ENCODE measurements at regions of chr2 and their contacts with region 1.

Region 1: DNA sequence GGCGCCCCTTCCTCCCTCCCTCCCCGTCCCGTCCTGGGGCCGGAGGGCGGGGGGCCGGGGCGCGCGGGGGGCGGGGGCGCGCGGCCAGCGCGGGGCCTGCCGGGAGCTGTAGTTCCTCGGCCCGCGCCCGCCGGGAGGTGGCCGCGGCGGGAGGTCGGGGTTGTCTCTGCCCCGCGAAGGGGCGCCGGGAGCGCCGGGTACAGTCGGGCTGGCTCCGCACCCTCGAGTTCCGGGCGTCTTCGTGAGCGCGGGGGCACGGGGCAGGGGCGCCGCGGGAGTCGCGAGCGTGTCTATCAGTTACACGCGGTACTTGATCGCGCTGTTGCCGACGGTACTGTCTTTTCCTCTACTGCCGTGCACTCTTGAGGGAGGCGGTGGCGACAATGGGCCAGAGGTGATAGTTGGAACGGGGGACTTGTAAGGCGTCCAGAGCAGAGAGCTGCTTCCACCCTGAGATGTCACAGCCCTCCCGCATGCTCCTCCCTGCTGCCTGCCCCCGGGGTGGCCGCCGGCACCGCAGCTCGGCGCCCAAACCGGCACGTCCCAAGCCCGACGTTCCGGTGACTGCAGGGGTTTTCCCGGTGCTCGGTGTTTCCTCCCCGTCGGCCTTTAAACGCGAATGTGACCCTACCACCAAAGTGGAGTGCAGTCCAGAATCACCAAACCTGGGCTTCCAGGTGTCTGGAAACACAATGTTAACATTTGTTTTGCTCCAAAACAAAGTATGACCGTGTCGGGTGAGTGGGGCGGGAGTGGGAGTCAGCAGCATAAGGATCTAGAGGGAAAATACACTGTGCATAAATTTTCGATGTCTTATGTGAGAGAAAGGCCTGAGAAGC is at the start of gene PRKD3:
- DNase-seq: peak in 8 of 9 experiments; percentile 13 to 84 (median 58)
- ATAC-seq: peak; percentile 75
- H3K4me3 ChIP-seq: peak within 1 kb of the TSS; percentile 81 to 84
- H3K4me3 Mint-ChIP-seq: peak within 1 kb of the TSS; percentile 98
- H3K27ac ChIP-seq: peak within 1 kb of the TSS; percentile 68 to 71
- H3K27ac Mint-ChIP-seq: peak within 1 kb of the TSS; percentile 97
- H3K4me1 ChIP-seq: peaks cover 25% of the 10 kb centered on the region
- H3K4me1 Mint-ChIP-seq: peaks cover 35% of the 10 kb centered on the region
- H3K27me3 ChIP-seq: peaks cover 0 to 8% of the 10 kb centered on the region in 2 experiments
- H3K27me3 Mint-ChIP-seq: peaks cover 3% of the 10 kb centered on the region
- CTCF ChIP-seq: no peak
- total RNA-seq, gene PRKD3: 37.2 to 43.8 TPM

Region 2: GRCh38 chr2:36966370-36967235 is 358.4 kb before region 1 on chr2 and contains the start of gene STRN:
- CTCF ChIA-PET with region 1: no interaction called
- POLR2A ChIA-PET with region 1: no interaction called
- intact Hi-C with region 1: loop called in 1 of 2 experiments (anchors 2 kb)
- DNase-seq: peak; percentile 94 to 99 (median 98)
- ATAC-seq: peak; percentile 91
- H3K4me3 ChIP-seq: peak within 1 kb of the TSS; percentile 69 to 96
- H3K4me3 Mint-ChIP-seq: peak within 1 kb of the TSS; percentile 98
- H3K27ac ChIP-seq: peak within 1 kb of the TSS; percentile 76 to 97
- H3K27ac Mint-ChIP-seq: peak within 1 kb of the TSS; percentile 99
- H3K4me1 ChIP-seq: peaks cover 19% of the 10 kb centered on the region
- H3K4me1 Mint-ChIP-seq: peaks cover 50% of the 10 kb centered on the region
- H3K27me3 ChIP-seq: no peaks in the 10 kb centered on the region
- H3K27me3 Mint-ChIP-seq: no peaks in the 10 kb centered on the region
- CTCF ChIP-seq: no peak
- total RNA-seq, gene STRN: 15.6 to 17.4 TPM

Region 3: GRCh38 chr2:37156857-37157714 is 167.9 kb before region 1 on chr2 and contains the start of gene EIF2AK2:
- CTCF ChIA-PET with region 1: no interaction called
- POLR2A ChIA-PET with region 1: no interaction called
- intact Hi-C with region 1: loop called in 1 of 2 experiments (anchors 5 kb)
- DNase-seq: peak; percentile 67 to 91 (median 84)
- ATAC-seq: peak; percentile 97
- H3K4me3 ChIP-seq: peak within 1 kb of the TSS; percentile 82 to 94
- H3K4me3 Mint-ChIP-seq: peak within 1 kb of the TSS; percentile 94
- H3K27ac ChIP-seq: peak within 1 kb of the TSS; percentile 62 to 76
- H3K27ac Mint-ChIP-seq: peak within 1 kb of the TSS; percentile 91
- H3K4me1 ChIP-seq: peaks cover 27% of the 10 kb centered on the region
- H3K4me1 Mint-ChIP-seq: peaks cover 50% of the 10 kb centered on the region
- H3K27me3 ChIP-seq: no peaks in the 10 kb centered on the region
- H3K27me3 Mint-ChIP-seq: no peaks in the 10 kb centered on the region
- CTCF ChIP-seq: no peak
- total RNA-seq, gene EIF2AK2: 30.1 to 33.7 TPM

Region 4: DNA sequence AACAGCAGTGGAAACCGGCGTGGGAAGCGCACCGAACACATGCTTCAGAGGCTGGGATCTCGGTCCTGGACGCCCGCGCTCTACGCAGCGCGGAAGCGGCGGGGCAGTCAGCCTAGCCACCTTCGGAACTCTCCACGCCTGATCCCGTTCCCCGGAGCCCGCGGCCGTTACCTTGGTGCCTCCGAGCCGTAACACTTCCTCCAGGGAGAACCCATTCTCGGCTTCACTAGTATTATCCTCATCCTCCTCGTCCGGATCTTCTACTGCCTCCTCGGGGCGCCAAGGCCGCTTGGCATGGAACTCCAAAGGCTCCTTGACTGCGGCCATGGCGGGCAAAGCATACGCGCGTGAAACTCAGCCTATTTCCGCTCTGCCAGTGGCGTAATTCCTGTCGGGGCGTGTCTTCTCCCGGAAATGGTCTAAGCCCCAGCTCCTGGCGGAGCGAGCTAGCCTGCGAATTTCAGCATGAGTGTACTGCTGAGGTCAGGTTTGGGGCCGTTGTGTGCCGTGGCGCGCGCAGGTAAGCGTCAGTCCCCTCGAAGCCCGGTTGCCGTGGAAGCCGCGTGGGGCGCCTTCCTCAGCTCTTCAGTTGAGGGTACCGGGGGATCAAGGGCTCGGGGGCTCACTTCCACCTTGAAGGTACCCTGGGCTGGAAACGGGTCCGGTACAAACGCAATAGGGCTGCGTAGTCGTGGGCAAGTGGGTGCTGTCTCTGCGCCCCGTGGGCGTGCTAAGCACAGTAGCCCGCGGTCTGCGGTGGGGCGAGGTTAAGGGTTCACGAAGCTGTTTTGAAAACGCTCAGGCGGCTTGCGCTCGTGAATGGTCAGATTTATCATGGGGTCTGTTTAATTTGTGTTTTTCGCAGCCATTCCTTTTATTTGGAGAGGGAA is 93.5 kb before region 1 on chr2 and contains the starts of genes CEBPZ and NDUFAF7:
- CTCF ChIA-PET with region 1: no interaction called
- POLR2A ChIA-PET with region 1: interaction called, 6 read pairs
- intact Hi-C with region 1: loop called in 1 of 2 experiments (anchors 1 kb)
- DNase-seq: peak; percentile 73 to 95 (median 87)
- ATAC-seq: peak; percentile 86
- H3K4me3 ChIP-seq: peak within 1 kb of the TSS; percentile 83 to 92
- H3K4me3 Mint-ChIP-seq: no peak within 1 kb of the TSS
- H3K27ac ChIP-seq: peak within 1 kb of the TSS; percentile 93 to 94
- H3K27ac Mint-ChIP-seq: no peak within 1 kb of the TSS
- H3K4me1 ChIP-seq: peaks cover 45% of the 10 kb centered on the region
- H3K4me1 Mint-ChIP-seq: peaks cover 44% of the 10 kb centered on the region
- H3K27me3 ChIP-seq: no peaks in the 10 kb centered on the region
- H3K27me3 Mint-ChIP-seq: no peaks in the 10 kb centered on the region
- CTCF ChIP-seq: no peak
- total RNA-seq, gene CEBPZ: 132 to 146 TPM
- total RNA-seq, gene NDUFAF7: 26.0 to 28.4 TPM

Region 5: DNA sequence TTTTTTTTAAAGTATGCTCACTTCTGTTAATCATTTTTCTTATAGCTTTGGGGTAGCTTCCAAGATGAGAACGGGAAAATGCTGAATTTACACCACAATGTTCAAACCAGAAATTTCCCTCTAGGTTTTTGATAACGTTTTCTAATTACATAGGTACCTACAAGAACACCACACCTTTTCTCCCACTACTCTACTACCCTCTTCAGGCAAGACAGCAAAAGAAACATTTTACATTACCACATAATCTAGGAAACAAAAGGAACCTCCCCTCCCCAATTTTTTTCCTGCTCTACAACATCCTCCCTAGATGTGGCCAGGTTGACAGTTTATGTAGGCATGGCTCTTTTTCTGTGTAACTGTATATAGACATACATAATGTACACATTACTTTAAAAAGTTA is 61.2 kb before region 1 on chr2:
- CTCF ChIA-PET with region 1: no interaction called
- POLR2A ChIA-PET with region 1: no interaction called
- intact Hi-C with region 1: no loop called
- DNase-seq: no peak
- ATAC-seq: no peak
- H3K4me3 ChIP-seq: no peak overlapping the region
- H3K4me3 Mint-ChIP-seq: no peak overlapping the region
- H3K27ac ChIP-seq: no peak overlapping the region
- H3K27ac Mint-ChIP-seq: no peak overlapping the region
- H3K4me1 ChIP-seq: no peaks in the 10 kb centered on the region
- H3K4me1 Mint-ChIP-seq: peaks cover 3% of the 10 kb centered on the region
- H3K27me3 ChIP-seq: no peaks in the 10 kb centered on the region
- H3K27me3 Mint-ChIP-seq: no peaks in the 10 kb centered on the region
- CTCF ChIP-seq: no peak

Region 6: DNA sequence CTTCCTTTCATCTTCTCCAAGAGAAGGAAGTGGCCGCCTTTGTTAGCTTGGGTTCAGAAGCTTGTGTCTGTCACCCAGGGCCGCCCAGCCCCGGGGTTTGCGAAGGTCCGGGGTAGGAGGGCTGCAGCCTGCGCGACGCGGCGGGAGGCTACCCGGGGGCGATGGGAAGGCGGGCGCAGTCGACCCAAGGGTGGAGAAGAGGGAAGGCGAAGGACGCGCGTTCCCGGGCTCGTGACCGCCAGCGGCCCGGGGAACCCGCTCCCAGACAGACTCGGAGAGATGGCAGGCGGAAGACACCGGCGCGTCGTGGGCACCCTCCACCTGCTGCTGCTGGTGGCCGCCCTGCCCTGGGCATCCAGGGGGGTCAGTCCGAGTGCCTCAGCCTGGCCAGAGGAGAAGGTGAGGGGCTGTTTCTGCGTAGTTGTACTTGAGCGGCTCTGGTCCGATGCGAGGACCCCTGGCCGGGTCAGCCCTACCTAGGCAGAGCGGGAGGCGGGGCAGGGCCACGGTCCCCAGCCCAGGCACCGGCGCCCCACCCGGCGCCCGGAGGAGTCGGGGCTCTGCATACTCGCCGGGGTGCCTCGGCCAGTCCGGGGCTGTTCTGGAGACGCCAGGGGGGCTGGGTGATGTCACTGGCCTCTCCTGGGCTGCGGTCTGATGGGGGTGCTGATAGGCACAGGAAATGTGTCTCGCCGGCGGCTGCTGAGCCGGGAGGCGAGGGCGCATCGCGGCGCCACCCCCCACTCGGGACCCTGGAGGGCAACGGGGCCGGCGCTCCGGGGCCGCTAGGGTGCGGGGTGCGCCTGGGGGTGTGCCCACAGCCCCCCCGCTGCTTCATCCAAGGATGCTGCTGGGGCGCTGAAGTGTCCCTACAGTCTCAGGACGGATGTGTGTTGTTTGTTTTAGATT is 19.7 kb after region 1 on chr2 and contains the start of gene QPCT:
- CTCF ChIA-PET with region 1: no interaction called
- POLR2A ChIA-PET with region 1: no interaction called
- intact Hi-C with region 1: loop called in 1 of 2 experiments (anchors 1 kb)
- DNase-seq: peak; percentile 47 to 85 (median 76)
- ATAC-seq: peak; percentile 88
- H3K4me3 ChIP-seq: peak within 1 kb of the TSS; percentile 52 to 55
- H3K4me3 Mint-ChIP-seq: peak within 1 kb of the TSS; percentile 83
- H3K27ac ChIP-seq: no peak within 1 kb of the TSS
- H3K27ac Mint-ChIP-seq: peak within 1 kb of the TSS; percentile 67
- H3K4me1 ChIP-seq: peaks cover 4% of the 10 kb centered on the region
- H3K4me1 Mint-ChIP-seq: peaks cover 17% of the 10 kb centered on the region
- H3K27me3 ChIP-seq: no peaks in the 10 kb centered on the region
- H3K27me3 Mint-ChIP-seq: peaks cover 10% of the 10 kb centered on the region
- CTCF ChIP-seq: no peak
- total RNA-seq, gene QPCT: 0.57 to 1.00 TPM

Region 7: GRCh38 chr2:37585982-37586621 is 261.1 kb after region 1 on chr2:
- CTCF ChIA-PET with region 1: no interaction called
- POLR2A ChIA-PET with region 1: no interaction called
- intact Hi-C with region 1: loop called in 1 of 2 experiments (anchors 10 kb)
- DNase-seq: peak; percentile 37 to 91 (median 75)
- ATAC-seq: peak; percentile 85
- H3K4me3 ChIP-seq: no peak overlapping the region
- H3K4me3 Mint-ChIP-seq: peak overlapping the region; percentile 42
- H3K27ac ChIP-seq: peak overlapping the region; percentile 2 to 83
- H3K27ac Mint-ChIP-seq: peak overlapping the region; percentile 88
- H3K4me1 ChIP-seq: peaks cover 61% of the 10 kb centered on the region
- H3K4me1 Mint-ChIP-seq: peaks cover 87% of the 10 kb centered on the region
- H3K27me3 ChIP-seq: no peaks in the 10 kb centered on the region
- H3K27me3 Mint-ChIP-seq: no peaks in the 10 kb centered on the region
- CTCF ChIP-seq: no peak

Region 8: GRCh38 chr2:39320162-39320561 is 1995.2 kb after region 1 on chr2:
- CTCF ChIA-PET with region 1: no interaction called
- POLR2A ChIA-PET with region 1: no interaction called
- intact Hi-C with region 1: no loop called
- DNase-seq: no peak
- ATAC-seq: no peak
- H3K4me3 ChIP-seq: no peak overlapping the region
- H3K4me3 Mint-ChIP-seq: no peak overlapping the region
- H3K27ac ChIP-seq: no peak overlapping the region
- H3K27ac Mint-ChIP-seq: no peak overlapping the region
- H3K4me1 ChIP-seq: no peaks in the 10 kb centered on the region
- H3K4me1 Mint-ChIP-seq: no peaks in the 10 kb centered on the region
- H3K27me3 ChIP-seq: no peaks in the 10 kb centered on the region
- H3K27me3 Mint-ChIP-seq: no peaks in the 10 kb centered on the region
- CTCF ChIP-seq: no peak

Measured in CD8-positive, alpha-beta T cell (primary cell).